Heart right ventricle (tissue), 16 donors: ENCODE measurements at regions of chr3 and their contacts with region 1.

Region 1: DNA sequence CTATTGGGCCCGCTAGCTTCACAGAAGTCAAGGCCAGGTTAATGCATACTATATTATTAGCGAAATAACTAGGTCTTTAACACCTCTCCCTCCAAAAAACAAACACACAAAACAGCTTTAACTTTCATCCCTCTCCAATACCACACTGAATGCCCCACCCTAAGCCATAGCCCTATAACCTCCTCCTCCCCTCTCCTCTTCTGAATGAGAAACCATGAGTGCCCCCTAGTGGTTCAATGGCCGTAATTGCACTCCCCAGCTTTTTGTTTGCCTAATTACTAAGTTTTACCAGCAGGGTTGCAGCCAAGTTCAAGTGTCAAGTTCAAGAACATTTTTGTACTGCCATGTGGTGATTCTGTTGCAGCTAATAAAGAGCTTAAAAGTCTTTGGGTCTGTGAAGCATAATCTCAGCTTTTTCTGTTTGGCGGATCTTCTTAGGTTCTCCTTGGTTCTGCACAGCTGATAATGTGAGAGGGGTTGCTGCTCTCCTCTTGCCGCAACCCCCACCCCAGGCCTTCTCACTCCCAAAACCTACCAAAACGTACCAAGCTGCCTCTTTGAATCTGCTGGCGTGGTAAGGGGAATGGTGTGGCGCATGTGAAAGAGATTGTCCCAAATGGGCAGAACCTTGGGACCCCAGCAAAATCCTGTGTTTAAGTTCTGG is 57.9 kb downstream of the RPL22L1 start:
- DNase-seq: peak; percentile 14 to 66
- ATAC-seq: peak; percentile 51 to 81 (median 72)
- H3K4me3 ChIP-seq: no peak overlapping the region
- H3K27ac ChIP-seq: no peak overlapping the region
- H3K4me1 ChIP-seq: peaks cover 0 to 6% (median 0%) of the 10 kb centered on the region in 9 donors
- H3K27me3 ChIP-seq: no peaks in the 10 kb centered on the region
- CTCF ChIP-seq: peak; percentile 76 to 90 (median 86)

Region 2: DNA sequence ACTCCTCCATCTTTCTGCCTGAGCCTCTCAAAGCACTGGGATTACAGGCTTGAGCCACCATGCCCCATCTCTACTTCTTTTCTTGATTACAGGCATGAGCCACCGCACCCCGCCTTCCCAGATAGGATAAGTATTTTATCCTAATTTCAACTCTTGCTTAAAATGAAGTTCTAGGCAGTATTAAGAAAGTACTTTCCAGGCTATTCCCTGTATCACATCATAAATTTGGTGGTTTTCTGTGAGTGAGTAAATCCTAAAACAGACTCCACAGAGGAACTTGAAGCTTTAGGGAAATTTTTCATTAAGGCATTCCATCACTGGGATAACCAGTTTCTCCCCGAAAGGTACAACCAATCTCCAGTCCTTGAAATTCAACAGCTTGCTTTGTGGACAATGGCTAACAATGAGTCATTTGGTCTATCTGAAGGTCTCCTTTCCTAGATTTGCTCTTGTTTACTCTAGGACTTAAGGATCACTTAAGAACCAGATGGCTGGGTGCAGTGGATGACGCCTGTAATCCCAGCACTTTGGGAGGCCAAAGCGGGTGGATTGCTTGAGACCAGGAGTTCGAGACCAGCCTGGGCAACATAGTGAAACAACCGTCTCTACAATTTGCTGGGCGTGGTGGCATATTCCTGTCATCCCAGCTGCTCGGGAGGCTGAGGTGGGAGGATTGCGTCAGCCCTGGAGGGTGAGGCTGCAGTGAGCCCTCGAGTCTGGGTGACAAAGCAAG is 504.2 kb before region 1 on chr3:
- intact Hi-C with region 1: loop called in 7 of 10 experiments (anchors 5 to 10 kb)
- DNase-seq: no peak
- ATAC-seq: no peak
- H3K4me3 ChIP-seq: no peak overlapping the region
- H3K27ac ChIP-seq: no peak overlapping the region
- H3K4me1 ChIP-seq: peaks cover 0 to 9% (median 0%) of the 10 kb centered on the region in 9 donors
- H3K27me3 ChIP-seq: no peaks in the 10 kb centered on the region
- CTCF ChIP-seq: no peak

Region 3: GRCh38 chr3:170414202-170414663 is 397.8 kb before region 1 on chr3:
- intact Hi-C with region 1: loop called (anchors 1 to 5 kb)
- DNase-seq: peak in 1 of 2 donors; percentile 25
- ATAC-seq: peak in 5 of 8 donors; percentile 29 to 51 (median 42)
- H3K4me3 ChIP-seq: no peak overlapping the region
- H3K27ac ChIP-seq: no peak overlapping the region
- H3K4me1 ChIP-seq: peaks cover 1 to 17% (median 12%) of the 10 kb centered on the region in 9 donors
- H3K27me3 ChIP-seq: peaks cover 0 to 38% (median 31%) of the 10 kb centered on the region in 7 donors
- CTCF ChIP-seq: peak; percentile 82 to 98 (median 92)

Region 4: DNA sequence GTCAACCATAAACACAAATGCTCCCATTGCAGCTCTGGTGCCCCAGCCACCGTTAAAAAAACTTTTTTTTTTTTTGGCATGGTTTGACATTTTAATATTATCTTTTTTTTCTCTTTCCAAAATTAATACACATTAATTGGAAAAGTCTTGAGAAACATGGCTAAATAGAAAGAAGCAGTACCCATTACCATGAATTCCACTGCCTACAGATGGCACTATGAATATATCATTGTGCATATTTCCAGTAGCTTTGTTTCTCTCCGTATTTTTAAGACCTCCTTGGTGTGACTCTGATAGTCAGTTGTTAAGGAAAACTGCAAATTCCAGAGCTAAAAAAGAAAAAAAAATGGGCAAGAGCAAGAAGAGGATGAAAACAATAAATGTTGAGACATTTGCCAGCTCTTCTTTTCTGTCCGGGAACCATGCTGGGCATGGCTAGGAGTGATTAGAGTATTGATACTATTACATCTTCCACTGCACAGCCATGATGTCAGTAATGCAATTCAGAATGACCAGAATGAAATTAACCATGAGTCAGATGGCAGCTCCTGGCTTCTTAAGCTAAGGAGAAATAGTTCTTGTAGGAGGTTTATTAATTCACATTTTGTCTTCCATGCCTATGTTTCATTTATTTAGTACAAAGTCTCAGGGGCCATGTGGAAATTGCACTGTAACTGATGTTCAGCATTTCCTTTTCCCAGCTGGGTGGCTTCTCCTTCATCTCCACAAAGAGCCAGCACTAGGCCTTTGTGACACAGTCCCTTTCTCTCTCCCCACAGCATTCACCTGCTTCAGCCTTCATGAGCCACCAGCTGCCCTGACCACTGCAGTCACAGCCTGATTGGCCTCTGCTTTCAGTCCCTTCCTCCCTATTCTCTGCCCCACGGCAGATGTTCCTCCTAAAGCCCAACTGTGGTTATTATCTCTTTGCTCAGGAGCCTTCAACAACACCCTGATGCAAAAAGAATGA is 258.0 kb before region 1 on chr3:
- intact Hi-C with region 1: loop called in 6 of 10 experiments (anchors 10 kb)
- DNase-seq: no peak
- ATAC-seq: no peak
- H3K4me3 ChIP-seq: no peak overlapping the region
- H3K27ac ChIP-seq: no peak overlapping the region
- H3K4me1 ChIP-seq: no peaks in the 10 kb centered on the region
- H3K27me3 ChIP-seq: no peaks in the 10 kb centered on the region
- CTCF ChIP-seq: peak in 5 of 9 donors; percentile 16 to 51 (median 42)

Region 5: GRCh38 chr3:170632780-170633179 is 179.3 kb before region 1 on chr3:
- intact Hi-C with region 1: no loop called
- DNase-seq: no peak
- ATAC-seq: no peak
- H3K4me3 ChIP-seq: no peak overlapping the region
- H3K27ac ChIP-seq: no peak overlapping the region
- H3K4me1 ChIP-seq: no peaks in the 10 kb centered on the region
- H3K27me3 ChIP-seq: no peaks in the 10 kb centered on the region
- CTCF ChIP-seq: no peak

Region 6: DNA sequence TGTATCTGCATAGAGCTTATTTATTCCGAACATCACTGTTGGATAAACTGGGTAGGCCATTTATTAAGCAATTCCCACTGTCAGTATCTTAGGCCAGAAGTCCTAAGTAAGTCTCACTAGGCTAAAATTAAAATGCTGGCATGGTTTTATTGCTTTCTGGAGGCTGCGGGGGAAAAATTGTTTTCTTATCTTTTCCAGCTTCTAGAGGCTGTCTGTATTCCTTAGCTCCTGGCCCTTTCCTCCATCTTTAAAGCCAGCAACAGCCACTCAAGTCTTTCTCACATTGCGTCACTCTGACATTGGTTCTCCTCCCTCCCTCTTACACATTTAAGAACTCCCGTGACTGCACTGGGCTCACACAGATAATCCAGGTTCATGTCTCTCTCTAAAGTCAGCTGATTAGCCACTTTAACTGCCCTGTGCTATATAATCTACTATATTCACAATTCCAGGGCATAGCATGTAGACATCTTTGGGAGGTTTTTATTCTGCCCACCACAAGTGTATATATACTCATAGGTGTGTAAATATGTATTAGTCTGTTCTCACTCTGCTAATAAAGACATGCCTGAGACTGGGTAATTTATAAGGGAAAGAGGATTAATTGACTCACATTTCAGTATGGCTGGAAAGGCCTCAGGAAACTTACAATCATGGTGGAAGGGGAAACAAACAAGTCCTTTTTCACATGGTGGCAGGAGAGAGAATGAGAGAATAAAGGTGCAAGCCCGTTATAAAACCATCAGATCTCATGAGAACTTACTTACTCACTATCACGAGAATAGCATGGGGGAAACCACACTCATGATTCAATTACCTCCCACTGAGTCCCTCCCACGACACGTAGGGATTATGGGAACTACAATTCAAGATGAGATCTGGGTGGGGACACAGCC is 112.7 kb before region 1 on chr3:
- intact Hi-C with region 1: loop called in 5 of 10 experiments (anchors 5 to 10 kb)
- DNase-seq: peak in 1 of 2 donors; percentile 8
- ATAC-seq: peak in 7 of 8 donors; percentile 67 to 86 (median 76)
- H3K4me3 ChIP-seq: no peak overlapping the region
- H3K27ac ChIP-seq: peak overlapping the region in 5 of 10 donors; percentile 5 to 67 (median 13)
- H3K4me1 ChIP-seq: peaks cover 0 to 22% (median 4%) of the 10 kb centered on the region in 9 donors
- H3K27me3 ChIP-seq: no peaks in the 10 kb centered on the region
- CTCF ChIP-seq: no peak

Region 7: DNA sequence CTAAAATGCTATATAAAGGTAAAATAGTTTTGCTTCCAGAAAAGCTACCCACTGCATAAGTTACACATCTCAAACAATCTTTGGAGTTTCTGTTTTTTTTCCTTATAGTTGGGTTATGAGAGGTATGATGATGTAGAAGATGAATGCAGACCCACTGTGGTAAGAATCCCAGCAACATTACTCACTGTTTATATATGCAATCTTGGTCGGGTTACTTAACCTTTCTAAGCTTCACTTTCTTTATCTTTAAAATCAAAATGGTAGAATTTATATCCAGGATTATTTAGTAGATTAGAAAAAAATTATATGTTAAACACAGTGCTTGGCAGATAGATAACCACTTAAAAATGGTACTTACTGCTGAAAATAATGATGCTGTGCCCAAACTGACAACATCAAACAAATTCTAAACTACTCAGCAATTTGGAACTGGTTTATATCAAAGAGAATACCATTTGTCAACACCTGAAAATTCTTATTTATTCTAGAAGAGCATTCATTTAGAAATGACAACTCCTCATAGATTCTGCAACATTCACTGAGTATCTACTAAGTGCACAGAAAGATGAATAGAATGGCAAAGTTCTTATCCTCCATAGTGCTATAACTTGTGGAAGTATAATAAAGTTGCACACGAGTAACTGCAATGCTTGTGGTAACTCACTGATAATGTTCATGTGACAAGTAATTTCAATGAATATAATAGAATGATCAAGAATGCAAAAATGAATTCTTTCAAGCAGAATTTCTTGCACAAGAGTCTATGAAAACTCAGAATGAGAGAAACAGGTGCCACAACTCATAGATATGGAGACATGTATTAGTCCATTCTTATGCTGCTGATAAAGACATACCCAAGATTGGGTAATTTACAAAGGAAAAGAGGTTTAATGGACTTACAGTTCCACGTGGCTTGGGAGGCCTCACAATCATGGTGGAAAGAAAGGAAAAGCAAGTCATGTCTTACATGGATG is 97.2 kb before region 1 on chr3:
- intact Hi-C with region 1: no loop called
- DNase-seq: no peak
- ATAC-seq: no peak
- H3K4me3 ChIP-seq: no peak overlapping the region
- H3K27ac ChIP-seq: no peak overlapping the region
- H3K4me1 ChIP-seq: no peaks in the 10 kb centered on the region
- H3K27me3 ChIP-seq: peaks cover 0 to 11% (median 0%) of the 10 kb centered on the region in 7 donors
- CTCF ChIP-seq: no peak

Region 8: DNA sequence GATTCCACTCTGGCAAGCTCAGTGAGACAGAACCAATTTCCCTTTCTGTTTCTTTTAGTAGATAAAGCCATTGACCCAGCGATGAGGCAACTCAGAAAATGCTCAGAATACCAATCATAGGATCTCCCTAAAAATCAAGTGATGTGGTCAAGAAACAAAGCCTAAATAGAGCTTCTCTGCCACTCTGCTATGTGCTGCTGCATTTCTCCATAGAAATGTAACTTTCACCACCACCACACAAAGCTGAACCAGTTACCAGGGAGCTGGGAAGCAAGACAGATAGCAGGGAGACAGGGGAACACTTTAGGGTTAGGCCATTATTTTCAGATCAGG is 51.9 kb before region 1 on chr3:
- intact Hi-C with region 1: no loop called
- DNase-seq: no peak
- ATAC-seq: no peak
- H3K4me3 ChIP-seq: no peak overlapping the region
- H3K27ac ChIP-seq: no peak overlapping the region
- H3K4me1 ChIP-seq: peaks cover 0 to 3% (median 0%) of the 10 kb centered on the region in 9 donors
- H3K27me3 ChIP-seq: no peaks in the 10 kb centered on the region
- CTCF ChIP-seq: no peak